Natural killer cell (primary cell): ENCODE measurements at regions of chr9 and their contacts with region 1.

Region 1: GRCh38 chr9:79946712-79947111 is 374.9 kb downstream of the TLE4 start:
- DNase-seq: no peak
- ATAC-seq: no peak
- H3K4me3 ChIP-seq: no peak overlapping the region
- H3K4me3 Mint-ChIP-seq: no peak overlapping the region
- H3K27ac ChIP-seq: no peak overlapping the region
- H3K27ac Mint-ChIP-seq: no peak overlapping the region
- H3K4me1 ChIP-seq: no peaks in the 10 kb centered on the region
- H3K4me1 Mint-ChIP-seq: no peaks in the 10 kb centered on the region
- H3K27me3 ChIP-seq: no peaks in the 10 kb centered on the region
- H3K27me3 Mint-ChIP-seq: no peaks in the 10 kb centered on the region
- CTCF ChIP-seq: no peak

Region 2: DNA sequence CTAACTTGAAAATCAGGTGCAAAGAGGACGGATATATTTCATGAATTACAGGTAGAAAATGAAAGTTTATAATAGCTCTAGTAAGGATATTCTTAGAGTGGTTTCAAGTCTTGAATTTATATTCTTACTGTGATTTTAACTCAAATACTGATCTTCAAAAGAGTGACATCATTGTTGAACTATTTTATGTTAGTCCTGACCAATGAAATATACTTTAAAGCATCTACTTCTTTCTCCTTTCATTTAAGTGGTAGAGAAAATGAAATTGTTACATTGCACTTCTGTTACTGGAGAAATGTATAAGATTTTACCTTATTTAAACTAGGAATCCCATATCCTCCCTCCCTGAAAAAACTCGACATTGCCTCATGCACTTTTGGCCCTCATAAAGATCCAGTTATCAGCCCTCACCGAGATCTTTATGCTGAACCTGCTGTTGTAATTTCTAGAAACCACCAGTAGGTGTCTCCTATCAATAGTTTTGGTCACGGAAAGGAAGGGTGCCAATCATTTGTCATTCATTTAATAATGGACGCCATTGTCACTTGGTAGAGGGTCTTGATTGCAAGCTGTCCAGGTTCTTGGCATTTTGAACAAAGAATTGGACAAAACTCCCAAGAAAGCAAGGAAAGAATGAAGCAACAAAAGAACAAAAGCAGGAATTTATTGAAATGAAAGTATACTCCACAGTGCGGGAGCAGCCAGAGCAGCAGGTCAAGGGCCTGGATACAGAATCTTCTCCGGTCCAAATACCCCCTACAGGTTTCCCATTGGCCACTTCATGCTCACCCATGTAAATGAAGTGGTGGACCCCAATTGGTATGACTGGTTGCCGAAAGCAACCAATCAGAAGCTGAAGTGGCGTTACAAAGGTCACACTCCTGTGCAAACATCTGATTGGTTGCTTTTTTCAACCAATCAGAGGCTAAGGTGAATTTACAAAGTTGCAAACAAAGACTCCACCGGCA is 1125.6 kb before region 1 on chr9:
- intact Hi-C with region 1: loop called (anchors 5 kb)
- DNase-seq: peak in 1 of 2 donors; percentile 39
- ATAC-seq: peak in 1 of 3 donors; percentile 58
- H3K4me3 ChIP-seq: no peak overlapping the region
- H3K4me3 Mint-ChIP-seq: peak overlapping the region; percentile 69
- H3K27ac ChIP-seq: no peak overlapping the region
- H3K27ac Mint-ChIP-seq: no peak overlapping the region
- H3K4me1 ChIP-seq: no peaks in the 10 kb centered on the region
- H3K4me1 Mint-ChIP-seq: peaks cover 5% of the 10 kb centered on the region in 2 donors
- H3K27me3 ChIP-seq: no peaks in the 10 kb centered on the region
- H3K27me3 Mint-ChIP-seq: no peaks in the 10 kb centered on the region
- CTCF ChIP-seq: peak; percentile 59